Sigmoid colon (tissue), 7 donors: ENCODE measurements at regions of chr3 and their contacts with region 1.

Region 1: DNA sequence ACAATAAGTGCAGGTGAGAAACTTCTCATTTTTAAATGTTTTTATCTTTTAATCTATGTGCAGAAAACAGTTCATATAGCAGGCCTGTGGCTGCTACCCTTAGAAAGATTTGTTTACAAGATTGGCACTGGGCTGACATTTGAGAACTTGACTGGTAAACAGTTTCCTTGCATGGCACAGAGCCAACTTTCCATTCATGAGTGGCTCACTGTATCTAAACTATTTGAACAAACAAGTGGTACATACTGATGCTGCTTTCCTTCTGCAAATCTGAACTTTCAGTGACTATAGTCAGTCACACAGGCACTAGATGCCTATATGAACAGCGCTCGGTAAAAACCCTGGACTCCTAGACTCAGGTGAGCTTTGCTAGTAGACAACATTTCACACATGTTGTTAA is 6.3 kb upstream of the GTPBP8 start:
- DNase-seq: no peak
- H3K4me3 ChIP-seq: no peak overlapping the region
- H3K27ac ChIP-seq: no peak overlapping the region
- H3K4me1 ChIP-seq: peaks cover 0 to 6% (median 0%) of the 10 kb centered on the region in 4 donors
- H3K27me3 ChIP-seq: no peaks in the 10 kb centered on the region
- CTCF ChIP-seq: no peak
- EP300 ChIP-seq: no peak
- POLR2A ChIP-seq: no peak

Region 2: GRCh38 chr3:112582244-112582874 is 402.1 kb before region 1 on chr3:
- intact Hi-C with region 1: loop called (anchors 5 kb)
- DNase-seq: no peak
- H3K4me3 ChIP-seq: no peak overlapping the region
- H3K27ac ChIP-seq: no peak overlapping the region
- H3K4me1 ChIP-seq: peaks cover 0 to 9% (median 0%) of the 10 kb centered on the region in 4 donors
- H3K27me3 ChIP-seq: no peaks in the 10 kb centered on the region
- CTCF ChIP-seq: peak; percentile 48 to 65 (median 50)
- EP300 ChIP-seq: no peak
- POLR2A ChIP-seq: no peak